Right ventricle myocardium inferior (tissue), 1 donor: ENCODE measurements at regions of chr7 and their contacts with region 1.

Region 1: DNA sequence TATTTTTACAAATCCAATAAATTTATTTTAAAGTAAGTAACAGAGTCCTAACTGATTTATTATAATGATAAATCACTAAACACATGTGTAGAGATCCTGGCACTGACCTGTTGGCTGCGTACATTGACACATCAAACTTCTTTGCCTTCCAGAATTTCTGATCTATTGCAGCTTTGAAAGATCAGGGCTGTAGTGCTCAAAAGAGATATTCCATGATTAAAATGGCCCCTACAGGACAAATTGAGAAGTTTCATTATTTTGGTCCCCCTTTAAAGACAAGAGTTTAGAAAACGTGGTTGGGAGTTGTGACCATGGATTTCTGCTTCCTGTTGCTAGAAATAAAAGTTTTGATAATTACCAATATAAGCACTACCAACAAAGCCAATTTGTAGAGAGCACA is 87.7 kb upstream of the PDK4 start:
- DNase-seq: no peak
- ATAC-seq: peak; percentile 71

Region 2: DNA sequence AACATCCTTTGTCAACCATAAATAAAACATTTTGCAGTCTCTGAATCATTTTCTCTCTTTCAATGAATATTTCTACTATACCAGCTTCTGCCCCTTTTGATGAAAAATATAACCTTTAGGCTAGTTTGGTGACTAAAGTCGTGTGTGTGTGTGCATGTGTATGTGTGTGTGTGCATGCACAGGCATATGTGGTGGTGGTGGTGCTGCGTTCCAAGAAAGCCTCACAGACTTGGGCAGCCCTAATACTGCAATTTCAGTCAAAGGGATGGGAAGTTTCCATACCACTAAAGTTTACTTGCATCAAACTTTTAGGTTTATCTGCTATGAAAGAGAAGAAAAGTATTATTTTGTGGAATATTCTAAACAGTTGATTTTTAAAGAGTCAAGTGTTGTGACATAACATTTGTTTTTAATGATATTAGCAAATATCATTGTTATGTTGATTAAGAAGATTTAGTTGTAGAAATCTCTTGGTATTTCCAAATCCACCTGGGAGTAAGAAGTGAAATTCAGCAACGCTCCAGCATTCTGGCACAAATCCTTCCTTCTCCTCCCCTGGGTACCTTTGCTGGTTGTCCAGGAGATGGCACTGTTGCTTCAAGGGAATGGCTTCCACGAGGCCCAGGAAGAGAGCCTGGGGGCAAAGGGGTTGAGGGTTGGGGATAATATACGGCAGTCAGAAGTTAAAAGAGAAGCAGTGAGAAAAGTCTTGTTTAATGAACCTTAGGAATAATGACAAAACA is 156.8 kb before region 1 on chr7:
- intact Hi-C with region 1: loop called (anchors 1 kb)
- DNase-seq: no peak
- ATAC-seq: peak; percentile 86

Region 3: DNA sequence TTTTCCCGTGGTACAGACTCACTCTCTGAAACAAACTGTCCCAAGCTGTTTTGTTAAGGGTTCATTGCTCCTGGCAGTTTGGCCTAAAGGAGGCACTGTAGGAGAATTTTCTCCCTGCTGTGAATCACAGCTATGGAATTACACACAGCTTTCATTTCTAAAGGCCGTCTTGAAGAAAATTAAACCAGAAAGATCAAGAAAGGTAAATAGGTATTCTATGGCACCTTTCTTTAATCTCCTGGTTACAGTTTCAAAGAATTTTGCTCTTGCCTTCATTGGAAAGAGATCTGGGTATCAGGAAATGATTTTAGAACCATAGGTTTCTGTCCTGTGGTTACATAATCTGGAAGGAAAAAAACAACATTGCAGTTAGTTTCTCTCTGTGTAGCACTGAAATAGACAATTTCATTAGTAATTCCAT is 138.9 kb before region 1 on chr7:
- intact Hi-C with region 1: loop called (anchors 1 kb)
- DNase-seq: no peak
- ATAC-seq: peak; percentile 81

Region 4: DNA sequence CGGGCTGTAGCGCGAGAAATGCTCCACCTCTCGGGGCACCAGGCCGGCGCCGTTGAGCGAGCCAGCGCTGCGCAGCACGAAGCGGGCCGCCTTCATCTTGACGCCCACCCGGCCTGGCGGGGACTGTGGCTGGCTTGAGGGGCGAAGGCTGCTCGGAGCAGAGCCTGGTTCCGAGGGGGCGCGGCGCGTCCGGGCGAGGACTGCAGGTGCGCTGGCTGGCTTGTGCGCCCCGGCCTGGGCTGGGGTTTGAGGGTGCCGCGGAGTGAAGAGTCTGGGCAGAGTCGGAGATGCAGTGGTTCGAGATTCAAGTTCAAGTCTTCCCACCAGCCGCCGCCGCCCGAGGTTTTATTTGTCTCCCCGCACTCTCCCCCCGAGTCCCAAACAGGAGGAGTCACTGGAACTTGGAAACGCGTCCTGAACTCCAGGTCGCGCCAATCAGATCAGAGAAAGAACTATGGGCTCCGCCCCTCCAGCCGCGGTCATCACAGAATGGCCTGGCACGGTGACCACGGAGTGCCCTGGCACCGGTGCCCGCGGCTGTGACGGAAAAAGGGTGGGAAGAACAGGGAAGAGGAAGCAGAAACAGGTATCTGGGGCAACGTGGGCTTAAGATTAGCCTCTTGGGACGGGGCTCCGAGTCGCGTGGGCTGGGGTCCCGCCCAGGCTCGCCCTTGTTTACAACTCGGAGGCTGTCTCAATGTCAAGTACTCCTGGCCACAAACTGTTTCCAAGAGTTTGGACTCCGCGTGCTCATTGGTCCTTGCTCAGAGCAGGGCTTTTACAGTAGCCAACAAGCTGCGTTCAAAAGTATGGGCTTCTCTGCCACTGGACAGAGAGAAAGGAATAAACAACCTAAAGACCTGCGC is 87.6 kb before region 1 on chr7 and contains the start of gene PDK4:
- intact Hi-C with region 1: loop called (anchors 5 kb)
- DNase-seq: peak; percentile 97
- ATAC-seq: peak; percentile 93
- total RNA-seq, gene PDK4: 431 TPM